Naive thymus-derived CD4-positive, alpha-beta T cell (primary cell): ENCODE measurements at regions of chr15 and their contacts with region 1.

Region 1: GRCh38 chr15:44573386-44573785 is 36.4 kb downstream of the EIF3J start:
- DNase-seq: no peak
- ATAC-seq: no peak
- H3K4me3 ChIP-seq: no peak overlapping the region
- H3K4me3 Mint-ChIP-seq: no peak overlapping the region
- H3K27ac ChIP-seq: peak overlapping the region; percentile 29
- H3K27ac Mint-ChIP-seq: peak overlapping the region in 4 of 9 donors; percentile 14 to 62 (median 33)
- H3K4me1 ChIP-seq: peaks cover 0 to 2% of the 10 kb centered on the region in 2 donors
- H3K4me1 Mint-ChIP-seq: peaks cover 4 to 11% (median 9%) of the 10 kb centered on the region in 7 donors
- H3K27me3 ChIP-seq: no peaks in the 10 kb centered on the region
- H3K27me3 Mint-ChIP-seq: no peaks in the 10 kb centered on the region

Region 2: GRCh38 chr15:45022871-45023658 is 449.7 kb after region 1 on chr15 and contains the start of gene SORD:
- CTCF ChIA-PET with region 1: no interaction called
- POLR2A ChIA-PET with region 1: no interaction called
- intact Hi-C with region 1: loop called in 1 of 2 experiments (anchors 5 kb)
- DNase-seq: peak; percentile 77 to 96 (median 83)
- ATAC-seq: peak; percentile 99
- H3K4me3 ChIP-seq: peak within 1 kb of the TSS; percentile 83
- H3K4me3 Mint-ChIP-seq: peak within 1 kb of the TSS; percentile 80 to 93 (median 88)
- H3K27ac ChIP-seq: peak within 1 kb of the TSS; percentile 42
- H3K27ac Mint-ChIP-seq: peak within 1 kb of the TSS; percentile 14 to 86 (median 60)
- H3K4me1 ChIP-seq: peaks cover 8 to 10% of the 10 kb centered on the region in 2 donors
- H3K4me1 Mint-ChIP-seq: peaks cover 12 to 32% (median 17%) of the 10 kb centered on the region in 7 donors
- H3K27me3 ChIP-seq: no peaks in the 10 kb centered on the region
- H3K27me3 Mint-ChIP-seq: peaks cover 12 to 28% (median 21%) of the 10 kb centered on the region in 5 donors
- total RNA-seq, gene SORD: 2.7 to 7.8 (median 6.4) TPM